Prostate gland (tissue), 2 donors: ENCODE measurements at regions of chr10 and their contacts with region 1.

Region 1: DNA sequence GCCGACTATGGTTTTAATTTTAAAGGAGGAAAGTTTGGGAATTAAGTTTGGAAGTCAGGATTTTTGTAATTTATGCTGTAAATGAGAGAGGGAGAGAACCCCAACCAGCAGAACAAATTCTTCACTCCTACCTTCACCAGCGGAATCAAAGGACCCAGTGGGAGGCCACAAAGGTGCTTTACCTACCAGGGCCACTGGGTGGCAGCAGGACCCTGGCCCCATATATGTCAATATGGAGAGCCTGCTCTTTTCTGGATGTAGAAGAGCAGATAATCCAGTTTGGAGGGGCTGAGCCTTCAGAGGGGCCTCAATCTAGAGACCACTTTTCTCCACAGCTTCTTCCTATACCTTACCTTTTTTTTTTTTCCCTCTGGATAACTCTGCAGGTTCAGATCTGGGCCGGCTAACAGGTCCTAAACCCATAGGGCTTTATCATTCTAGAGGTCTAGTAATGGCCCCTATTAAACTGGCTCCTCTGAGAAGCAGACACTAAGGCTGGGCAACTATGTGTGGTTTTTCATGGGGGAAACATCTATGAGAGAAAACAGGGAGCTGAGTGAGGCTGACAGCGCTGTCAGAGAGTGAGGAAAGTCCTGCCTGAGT is 8.5 kb upstream of the SCD start:
- DNase-seq: peak; percentile 71
- H3K4me3 ChIP-seq: no peak overlapping the region
- H3K27ac ChIP-seq: no peak overlapping the region
- H3K4me1 ChIP-seq: peaks cover 6% of the 10 kb centered on the region
- H3K27me3 ChIP-seq: peaks cover 2% of the 10 kb centered on the region
- CTCF ChIP-seq: peak; percentile 84 to 93 (median 92)
- POLR2A ChIP-seq: no peak

Region 2: DNA sequence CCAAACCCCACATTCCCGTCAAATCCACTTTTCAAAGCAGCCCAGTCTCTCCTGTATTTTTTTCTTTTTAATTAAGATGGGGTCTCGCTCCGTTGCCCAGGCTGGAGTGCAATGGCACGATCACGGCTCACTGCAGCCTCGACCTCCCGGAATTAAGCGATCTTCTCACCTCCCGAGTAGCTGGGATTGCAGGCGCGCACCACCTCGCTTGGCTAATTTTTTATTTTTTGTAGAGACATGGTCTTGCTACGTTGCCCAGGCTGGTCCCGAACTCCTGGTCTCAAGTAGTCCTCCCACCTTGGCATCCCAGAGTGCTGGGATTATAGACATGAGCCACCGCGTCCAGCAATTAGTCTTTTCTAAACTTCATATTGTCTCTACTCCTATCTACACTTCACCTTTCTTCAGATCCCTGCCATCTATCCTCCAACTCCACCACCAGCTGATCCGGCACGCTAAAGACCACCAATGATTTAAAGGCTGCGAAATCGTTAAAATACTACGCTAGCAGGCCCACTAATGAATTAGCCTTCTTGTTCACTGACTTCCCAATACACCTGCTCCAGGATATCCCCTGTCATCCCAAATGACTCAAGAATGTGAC is 108.6 kb before region 1 on chr10:
- intact Hi-C with region 1: no loop called
- DNase-seq: no peak
- H3K4me3 ChIP-seq: peak overlapping the region; percentile 95
- H3K27ac ChIP-seq: peak overlapping the region; percentile 64 to 76
- H3K4me1 ChIP-seq: no peaks in the 10 kb centered on the region
- H3K27me3 ChIP-seq: no peaks in the 10 kb centered on the region
- CTCF ChIP-seq: no peak
- POLR2A ChIP-seq: no peak

Region 3: GRCh38 chr10:100359529-100360150 is 21.1 kb after region 1 on chr10:
- intact Hi-C with region 1: no loop called
- DNase-seq: no peak
- H3K4me3 ChIP-seq: no peak overlapping the region
- H3K27ac ChIP-seq: peak overlapping the region; percentile 46 to 56
- H3K4me1 ChIP-seq: peaks cover 13% of the 10 kb centered on the region
- H3K27me3 ChIP-seq: no peaks in the 10 kb centered on the region
- CTCF ChIP-seq: no peak
- POLR2A ChIP-seq: no peak

Region 4: GRCh38 chr10:100373298-100374136 is 35.0 kb after region 1 on chr10:
- intact Hi-C with region 1: loop called (anchors 2 kb)
- DNase-seq: peak; percentile 99
- H3K4me3 ChIP-seq: peak overlapping the region; percentile 52 to 55
- H3K27ac ChIP-seq: peak overlapping the region; percentile 98 to 99
- H3K4me1 ChIP-seq: peaks cover 15% of the 10 kb centered on the region
- H3K27me3 ChIP-seq: no peaks in the 10 kb centered on the region
- CTCF ChIP-seq: no peak
- POLR2A ChIP-seq: peak; percentile 64

Region 5: GRCh38 chr10:100433253-100434240 is 95.0 kb after region 1 on chr10:
- intact Hi-C with region 1: loop called (anchors 1 kb)
- DNase-seq: peak; percentile 98
- H3K4me3 ChIP-seq: no peak overlapping the region
- H3K27ac ChIP-seq: no peak overlapping the region
- H3K4me1 ChIP-seq: no peaks in the 10 kb centered on the region
- H3K27me3 ChIP-seq: no peaks in the 10 kb centered on the region
- CTCF ChIP-seq: peak; percentile 96 to 100 (median 100)
- POLR2A ChIP-seq: no peak

Region 6: DNA sequence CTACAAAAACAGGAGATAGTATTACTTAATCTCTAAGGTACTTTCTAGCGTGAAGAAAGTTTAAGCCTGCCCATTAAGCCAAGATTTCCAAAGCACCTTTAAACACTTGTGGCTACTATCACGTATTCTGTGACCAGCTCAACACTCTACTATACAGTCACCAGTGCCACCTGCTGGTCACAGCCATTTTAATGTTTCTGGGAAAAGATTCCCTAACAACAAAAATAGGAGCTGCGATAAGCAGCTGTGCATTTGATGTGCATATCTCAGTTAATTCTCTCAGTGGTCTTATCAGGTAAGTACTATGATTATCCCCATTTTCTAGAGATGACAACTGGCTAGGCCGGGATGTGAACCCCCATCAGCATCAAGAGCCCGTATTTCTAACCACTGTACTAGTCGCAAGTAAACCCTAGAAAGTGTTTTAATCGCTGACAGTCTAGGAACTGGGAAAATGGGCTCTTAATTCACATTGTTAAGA is 180.3 kb after region 1 on chr10:
- intact Hi-C with region 1: loop called (anchors 5 kb)
- DNase-seq: peak; percentile 77
- H3K4me3 ChIP-seq: peak overlapping the region; percentile 32 to 33
- H3K27ac ChIP-seq: no peak overlapping the region
- H3K4me1 ChIP-seq: no peaks in the 10 kb centered on the region
- H3K27me3 ChIP-seq: no peaks in the 10 kb centered on the region
- CTCF ChIP-seq: peak; percentile 31 to 84 (median 78)
- POLR2A ChIP-seq: no peak